ENCODE measurements at regions of chr13 and their contacts with region 1.

Region 1: DNA sequence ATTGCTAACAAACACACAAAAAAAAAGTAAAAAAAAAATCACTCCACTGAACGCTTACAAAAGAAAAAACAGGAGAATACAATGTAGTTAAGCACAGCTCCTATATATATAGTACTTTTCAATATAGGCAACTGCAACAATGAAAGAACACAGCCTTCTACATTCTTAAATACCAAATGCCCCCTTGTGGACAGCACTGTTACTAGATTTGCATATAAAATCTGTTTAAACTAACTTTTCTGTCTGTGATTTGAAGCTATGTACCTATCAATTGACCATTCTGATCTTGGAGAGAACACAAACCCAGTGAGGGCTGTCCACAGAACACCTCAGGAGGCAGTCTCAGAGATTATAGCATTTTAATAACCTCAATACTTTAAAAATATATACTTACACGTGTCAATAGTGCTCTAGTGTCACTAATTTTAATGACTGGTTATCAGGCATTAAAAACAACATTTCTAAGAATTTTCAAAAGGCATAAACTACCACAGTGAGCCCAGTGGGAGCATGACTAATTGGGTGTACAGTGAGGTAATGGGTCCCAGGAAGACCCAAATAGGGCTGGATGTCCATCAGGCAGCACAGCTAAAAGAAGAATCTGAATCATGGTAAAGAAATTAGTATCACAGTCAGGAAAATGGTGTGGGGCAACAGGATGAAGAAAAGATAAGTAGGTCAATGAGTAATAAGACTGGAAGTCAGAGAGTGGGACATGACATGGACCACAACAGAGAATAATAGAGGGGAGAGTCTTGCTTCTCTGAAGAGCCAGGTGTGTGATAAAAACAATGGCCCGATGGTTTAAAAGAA is 22.2 kb downstream of the CCDC169 start:
- DNase-seq: peak in 1 of 2 donors; percentile 11
- ATAC-seq: peak in 1 of 2 donors; percentile 49
- H3K4me3 ChIP-seq: no peak overlapping the region
- H3K27ac ChIP-seq: no peak overlapping the region
- H3K4me1 ChIP-seq: peaks cover 0 to 3% of the 10 kb centered on the region in 2 donors
- H3K27me3 ChIP-seq: no peaks in the 10 kb centered on the region
- CTCF ChIP-seq: peak; percentile 40 to 55 (median 54)
- POLR2A ChIP-seq: no peak

Region 2: DNA sequence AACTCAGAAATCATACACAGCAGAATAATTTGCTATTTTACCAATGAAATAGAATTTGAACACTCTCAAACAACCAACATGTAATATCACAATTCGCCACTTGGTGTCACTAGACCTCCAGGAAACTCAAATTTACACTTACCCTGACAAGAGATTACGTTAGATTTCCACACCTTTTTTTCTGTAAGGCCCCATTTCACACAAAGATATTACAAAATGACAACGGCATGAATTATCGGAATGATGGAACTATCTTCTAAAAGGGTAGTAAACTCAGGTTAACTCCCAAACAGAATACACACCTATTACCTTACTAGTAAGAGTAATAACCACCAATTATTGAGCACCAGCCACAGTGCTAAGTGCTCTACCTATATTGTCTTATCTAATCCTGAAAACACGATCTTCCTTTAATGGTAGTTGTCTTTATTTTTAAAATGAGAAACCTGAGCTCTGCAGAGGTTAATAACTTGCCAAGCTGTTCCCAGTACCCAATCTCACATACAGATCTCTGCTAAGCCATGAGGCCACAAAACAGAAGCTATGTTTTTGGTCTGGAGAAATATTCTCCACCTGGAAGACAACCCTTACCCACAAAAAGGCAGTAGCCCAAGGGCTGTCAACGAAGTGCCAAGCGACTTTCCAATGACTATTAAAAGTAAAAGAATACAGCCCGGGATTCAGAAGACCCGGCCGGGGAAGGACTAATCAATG is 296.6 kb before region 1 on chr13:
- in situ Hi-C with region 1: loop called (anchors 5 to 10 kb)
- intact Hi-C with region 1: loop called (anchors 1 kb)
- DNase-seq: no peak
- ATAC-seq: peak; percentile 56 to 65
- H3K4me3 ChIP-seq: no peak overlapping the region
- H3K27ac ChIP-seq: peak overlapping the region; percentile 25 to 72 (median 60)
- H3K4me1 ChIP-seq: no peaks in the 10 kb centered on the region
- H3K27me3 ChIP-seq: no peaks in the 10 kb centered on the region
- CTCF ChIP-seq: peak; percentile 75 to 85 (median 78)
- POLR2A ChIP-seq: no peak

Region 3: GRCh38 chr13:35994131-35994966 is 281.0 kb before region 1 on chr13:
- in situ Hi-C with region 1: no loop called
- intact Hi-C with region 1: loop called (anchors 5 kb)
- DNase-seq: peak; percentile 56 to 68
- ATAC-seq: peak; percentile 97 to 99
- H3K4me3 ChIP-seq: no peak overlapping the region
- H3K27ac ChIP-seq: peak overlapping the region in 3 of 4 donors; percentile 22 to 64 (median 43)
- H3K4me1 ChIP-seq: peaks cover 9 to 29% of the 10 kb centered on the region in 2 donors
- H3K27me3 ChIP-seq: no peaks in the 10 kb centered on the region
- CTCF ChIP-seq: no peak
- POLR2A ChIP-seq: no peak

Region 4: GRCh38 chr13:36310417-36311108 is 35.2 kb after region 1 on chr13:
- in situ Hi-C with region 1: no loop called
- intact Hi-C with region 1: no loop called
- DNase-seq: no peak
- ATAC-seq: no peak
- H3K4me3 ChIP-seq: no peak overlapping the region
- H3K27ac ChIP-seq: no peak overlapping the region
- H3K4me1 ChIP-seq: peaks cover 0 to 4% of the 10 kb centered on the region in 2 donors
- H3K27me3 ChIP-seq: no peaks in the 10 kb centered on the region
- CTCF ChIP-seq: no peak
- POLR2A ChIP-seq: no peak

Region 5: DNA sequence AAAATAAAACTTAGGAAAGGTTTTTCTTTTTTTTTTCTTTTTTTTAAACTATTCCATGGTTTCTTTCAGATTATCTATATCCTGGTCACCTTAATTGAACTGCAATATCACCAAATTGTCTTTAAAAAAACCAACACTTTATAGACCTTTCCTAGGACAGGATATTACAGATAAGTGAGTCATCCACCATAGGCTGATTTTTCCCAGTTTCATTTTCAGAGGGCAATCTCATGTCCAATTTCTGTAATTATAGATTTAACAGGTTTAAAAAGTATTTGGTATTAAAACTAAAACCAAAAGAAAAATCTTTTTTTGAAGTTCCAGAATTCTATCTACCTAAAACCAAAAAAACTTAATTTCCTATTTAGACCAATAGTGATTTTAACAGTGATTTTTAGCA is 57.6 kb after region 1 on chr13:
- in situ Hi-C with region 1: no loop called
- intact Hi-C with region 1: no loop called
- DNase-seq: no peak
- ATAC-seq: no peak
- H3K4me3 ChIP-seq: no peak overlapping the region
- H3K27ac ChIP-seq: no peak overlapping the region
- H3K4me1 ChIP-seq: peaks cover 33 to 39% of the 10 kb centered on the region in 2 donors
- H3K27me3 ChIP-seq: no peaks in the 10 kb centered on the region
- CTCF ChIP-seq: no peak
- POLR2A ChIP-seq: no peak

Measured in gastrocnemius medialis (tissue), 4 donors.